ENCODE measurements at regions of chr11 and their contacts with region 1.

Region 1: DNA sequence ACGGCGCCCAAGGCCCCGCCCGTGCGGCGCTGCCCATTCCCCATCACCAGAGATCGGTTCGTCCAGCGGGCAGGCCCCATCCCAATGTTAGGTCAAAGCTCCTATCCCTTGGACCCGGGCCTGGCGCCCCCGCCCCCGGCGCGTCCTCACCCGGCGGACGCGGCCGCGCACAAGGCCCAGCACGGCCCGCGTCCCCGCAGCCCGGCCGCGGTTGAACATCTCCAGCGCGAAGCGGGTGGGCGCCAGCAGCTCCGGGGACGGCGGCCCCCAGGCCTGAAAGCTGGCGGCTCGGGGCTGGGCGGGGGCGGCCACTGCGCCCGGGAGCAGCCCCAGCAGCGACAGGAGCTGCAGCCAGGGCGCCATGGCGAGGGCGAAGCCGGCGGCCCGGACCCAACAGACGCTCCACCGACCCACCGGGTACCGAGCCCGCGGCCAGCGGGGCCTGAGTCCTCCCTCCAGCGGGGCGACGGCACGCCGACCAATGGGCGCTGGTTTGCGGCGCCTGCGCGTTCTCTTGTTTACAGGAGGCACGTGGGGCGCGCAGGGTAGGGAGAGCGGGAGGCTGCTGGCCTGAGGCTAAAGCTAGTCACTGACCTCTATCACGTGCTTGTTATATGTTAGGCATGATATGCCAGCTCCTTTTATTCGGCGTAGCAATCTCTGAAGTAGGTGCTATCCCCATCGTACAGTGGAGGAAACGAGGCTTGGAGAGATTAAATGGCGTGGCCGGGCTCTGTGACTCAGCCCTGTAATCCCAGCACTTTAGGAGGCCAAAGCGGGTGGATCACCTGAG is at the start of gene CTSF:
- DNase-seq: peak; percentile 82
- H3K4me3 Mint-ChIP-seq: peak within 1 kb of the TSS; percentile 71
- H3K27ac Mint-ChIP-seq: peak within 1 kb of the TSS; percentile 77
- H3K4me1 Mint-ChIP-seq: peaks cover 7% of the 10 kb centered on the region
- H3K27me3 Mint-ChIP-seq: peaks cover under 1% of the 10 kb centered on the region
- CTCF ChIP-seq: no peak
- total RNA-seq, gene CTSF: 8.6 and 11.8 TPM in 2 replicates

Region 2: DNA sequence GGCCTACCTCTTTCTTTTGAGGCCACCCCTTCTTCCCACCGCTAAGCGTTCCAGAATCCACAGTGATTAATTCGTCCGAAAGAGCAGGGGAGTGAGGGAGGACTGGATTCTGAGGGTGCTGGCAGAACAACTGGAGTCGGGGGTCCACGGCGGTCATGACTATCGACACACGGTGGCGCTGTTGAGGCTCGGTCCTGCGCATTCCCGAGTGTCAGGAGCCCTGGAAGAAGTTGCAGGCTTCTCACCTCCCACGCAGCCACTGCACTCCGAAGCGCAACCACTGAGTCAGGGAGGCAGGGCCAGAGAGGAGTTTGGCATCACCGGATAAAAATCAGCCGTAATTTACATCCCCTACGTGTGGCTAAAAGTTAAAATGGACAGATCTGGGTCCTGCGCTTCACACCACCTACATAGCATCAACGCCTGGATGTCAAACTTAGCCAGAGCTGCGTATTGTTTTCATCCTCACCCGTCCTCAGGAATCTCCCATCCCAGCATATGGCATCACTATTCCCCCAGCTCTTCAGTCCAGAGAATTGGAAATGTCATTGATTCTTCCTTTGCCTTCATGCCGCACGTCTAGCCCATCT is 10.8 kb after region 1 on chr11:
- CTCF ChIA-PET with region 1: interaction called, 3 read pairs
- POLR2A ChIA-PET with region 1: interaction called, 14 read pairs
- intact Hi-C with region 1: no loop called
- DNase-seq: peak; percentile 73
- H3K4me3 Mint-ChIP-seq: no peak overlapping the region
- H3K27ac Mint-ChIP-seq: no peak overlapping the region
- H3K4me1 Mint-ChIP-seq: peaks cover 14% of the 10 kb centered on the region
- H3K27me3 Mint-ChIP-seq: peaks cover 28% of the 10 kb centered on the region
- CTCF ChIP-seq: peak; percentile 79

Region 3: DNA sequence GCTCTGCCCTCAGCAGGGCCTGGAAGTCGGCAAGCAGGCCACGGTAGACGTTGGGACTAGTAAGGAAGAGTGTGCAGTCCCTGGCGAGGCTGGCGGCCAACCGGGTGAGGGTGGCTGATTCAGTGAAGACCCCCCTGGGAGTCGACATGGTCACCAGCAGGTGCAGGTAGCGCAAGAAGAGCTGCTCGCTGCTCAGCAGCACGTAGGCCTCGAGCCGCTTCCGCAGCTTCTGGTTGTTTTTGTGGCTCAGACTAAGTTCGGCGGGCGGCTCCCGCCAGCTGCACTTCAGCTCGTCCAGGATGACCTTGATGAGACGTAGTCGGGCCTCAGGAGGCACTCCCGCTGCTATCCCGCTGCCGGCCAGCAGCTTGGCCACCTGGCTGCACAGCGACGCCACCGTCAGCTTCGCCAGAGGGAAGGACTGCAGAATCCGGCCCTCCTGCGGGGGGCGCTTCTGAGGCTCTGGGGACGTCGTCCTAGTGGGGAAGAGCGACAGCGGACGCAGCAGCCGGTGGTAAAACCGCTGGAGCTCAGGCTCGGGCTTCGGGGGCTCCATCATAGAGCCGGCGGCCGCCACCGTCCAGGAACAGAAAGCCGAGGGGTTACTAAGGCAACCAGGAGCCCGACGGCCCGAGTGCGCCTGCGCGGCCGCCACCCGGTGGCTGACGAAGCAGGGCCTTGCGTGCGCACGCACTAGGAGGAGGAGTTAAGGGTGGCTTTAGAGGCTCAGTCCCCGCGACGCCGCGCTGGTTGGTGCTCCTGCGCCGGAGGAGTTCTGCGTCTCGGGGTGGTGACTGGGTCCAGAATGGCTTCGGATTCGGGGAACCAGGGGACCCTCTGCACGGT is 24.4 kb after region 1 on chr11 and contains the starts of genes CCDC87 and CCS:
- CTCF ChIA-PET with region 1: interaction called, 3 read pairs
- POLR2A ChIA-PET with region 1: interaction called, 10 read pairs
- intact Hi-C with region 1: no loop called
- DNase-seq: peak; percentile 94
- H3K4me3 Mint-ChIP-seq: peak within 1 kb of the TSS; percentile 94
- H3K27ac Mint-ChIP-seq: peak within 1 kb of the TSS; percentile 96
- H3K4me1 Mint-ChIP-seq: peaks cover 5% of the 10 kb centered on the region
- H3K27me3 Mint-ChIP-seq: no peaks in the 10 kb centered on the region
- CTCF ChIP-seq: peak; percentile 33
- total RNA-seq, gene CCDC87: not detected in 2 replicates
- total RNA-seq, gene CCS: 25.8 and 34.4 TPM in 2 replicates

Region 4: DNA sequence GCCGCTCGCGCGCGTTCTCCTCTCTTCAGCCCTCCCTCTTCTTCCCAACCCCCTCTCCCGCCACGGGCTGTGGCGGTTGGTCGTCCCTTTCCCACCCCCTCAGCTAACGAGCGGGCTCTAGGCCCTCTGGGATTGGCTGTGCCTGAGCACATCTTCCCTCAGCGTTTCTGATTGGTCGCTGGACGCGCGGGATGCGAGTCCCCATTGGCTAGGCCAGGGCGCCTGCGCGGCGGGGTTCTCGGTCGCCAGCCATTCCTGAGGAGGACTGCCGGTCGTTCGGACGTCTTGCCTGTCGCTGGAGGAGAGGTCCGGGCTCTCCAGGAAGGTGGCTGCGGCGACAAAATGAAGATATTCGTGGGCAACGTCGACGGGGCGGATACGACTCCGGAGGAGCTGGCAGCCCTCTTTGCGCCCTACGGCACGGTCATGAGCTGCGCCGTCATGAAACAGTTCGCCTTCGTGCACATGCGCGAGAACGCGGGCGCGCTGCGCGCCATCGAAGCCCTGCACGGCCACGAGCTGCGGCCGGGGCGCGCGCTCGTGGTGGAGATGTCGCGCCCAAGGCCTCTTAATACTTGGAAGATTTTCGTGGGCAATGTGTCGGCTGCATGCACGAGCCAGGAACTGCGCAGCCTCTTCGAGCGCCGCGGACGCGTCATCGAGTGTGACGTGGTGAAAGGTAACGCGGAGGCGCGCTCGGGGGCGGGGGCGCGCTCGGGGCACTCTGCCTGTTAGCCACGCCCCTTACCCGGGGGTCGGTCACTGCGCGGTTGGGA is 48.2 kb after region 1 on chr11 and contains the start of gene RBM14:
- CTCF ChIA-PET with region 1: no interaction called
- POLR2A ChIA-PET with region 1: interaction called, 23 read pairs
- intact Hi-C with region 1: no loop called
- DNase-seq: peak; percentile 99
- H3K4me3 Mint-ChIP-seq: peak within 1 kb of the TSS; percentile 86
- H3K27ac Mint-ChIP-seq: peak within 1 kb of the TSS; percentile 96
- H3K4me1 Mint-ChIP-seq: peaks cover 20% of the 10 kb centered on the region
- H3K27me3 Mint-ChIP-seq: no peaks in the 10 kb centered on the region
- CTCF ChIP-seq: no peak
- total RNA-seq, gene RBM14: 78.1 and 88.3 TPM in 2 replicates

Region 5: DNA sequence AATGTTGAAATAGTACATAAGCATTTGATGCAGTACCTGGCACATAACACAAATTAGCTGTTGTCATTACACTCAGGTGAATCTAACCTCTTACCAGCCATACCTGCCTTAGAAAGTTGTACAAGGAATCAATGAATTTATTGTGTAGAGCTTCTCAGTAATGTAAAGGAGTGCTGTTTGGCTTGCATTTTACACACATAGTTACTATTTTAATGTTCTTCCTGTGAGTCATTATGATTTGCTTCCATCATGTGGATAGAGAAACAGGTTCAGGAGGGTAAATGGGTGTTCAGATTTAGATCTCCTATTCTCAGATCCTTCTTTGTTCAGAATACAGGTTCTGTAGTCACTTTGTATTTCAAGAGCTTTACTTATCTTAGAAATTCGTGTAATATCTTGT is 247.3 kb after region 1 on chr11:
- CTCF ChIA-PET with region 1: no interaction called
- POLR2A ChIA-PET with region 1: no interaction called
- intact Hi-C with region 1: no loop called
- DNase-seq: no peak
- H3K4me3 Mint-ChIP-seq: no peak overlapping the region
- H3K27ac Mint-ChIP-seq: peak overlapping the region; percentile 63
- H3K4me1 Mint-ChIP-seq: peaks cover 7% of the 10 kb centered on the region
- H3K27me3 Mint-ChIP-seq: no peaks in the 10 kb centered on the region
- CTCF ChIP-seq: no peak

Measured in MCF 10A (cell line).